HCT116 (cell line): ENCODE measurements at regions of chr11 and their contacts with region 1.

Region 1: GRCh38 chr11:65471410-65471762 is 27.5 kb upstream of the MALAT1 start:
- DNase-seq: no peak
- ATAC-seq: peak; percentile 73
- H3K4me3 ChIP-seq: peak overlapping the region in 1 of 2 experiments; percentile 31; a peak in 2 of 4 replicates
- H3K27ac ChIP-seq: peak overlapping the region; percentile 97
- H3K4me1 ChIP-seq: peaks cover 65 to 81% of the 10 kb centered on the region in 2 experiments
- H3K27me3 ChIP-seq: no peaks in the 10 kb centered on the region
- CTCF ChIP-seq: peak in 2 of 3 experiments; percentile 64 to 69; a peak in 4 of 6 replicates
- POLR2A ChIP-seq: no peak
- RAD21 ChIP-seq: no peak

Region 2: GRCh38 chr11:65366340-65366773 is 105.0 kb before region 1 on chr11:
- CTCF ChIA-PET with region 1: no interaction called
- POLR2A ChIA-PET with region 1: no interaction called
- RAD21 ChIA-PET with region 1: interaction called in 1 of 2 experiments, 3 read pairs
- intact Hi-C with region 1: loop called (anchors 1 kb)
- DNase-seq: peak; percentile 67
- ATAC-seq: peak; percentile 90
- H3K4me3 ChIP-seq: no peak overlapping the region
- H3K27ac ChIP-seq: no peak overlapping the region
- H3K4me1 ChIP-seq: peaks cover 6 to 10% of the 10 kb centered on the region in 2 experiments; a peak in 3 of 4 replicates
- H3K27me3 ChIP-seq: no peaks in the 10 kb centered on the region
- CTCF ChIP-seq: peak; percentile 62 to 85 (median 66)
- POLR2A ChIP-seq: no peak
- RAD21 ChIP-seq: peak; percentile 95

Region 3: GRCh38 chr11:65382033-65382807 is 89.2 kb before region 1 on chr11 and contains the start of gene SLC25A45:
- CTCF ChIA-PET with region 1: interaction called, 5 read pairs
- POLR2A ChIA-PET with region 1: interaction called, 3 read pairs
- RAD21 ChIA-PET with region 1: no interaction called
- intact Hi-C with region 1: loop called (anchors 2 kb)
- DNase-seq: peak; percentile 92
- ATAC-seq: peak; percentile 83
- H3K4me3 ChIP-seq: peak within 1 kb of the TSS; percentile 46 to 55
- H3K27ac ChIP-seq: peak within 1 kb of the TSS; percentile 99
- H3K4me1 ChIP-seq: peaks cover 55 to 69% of the 10 kb centered on the region in 2 experiments
- H3K27me3 ChIP-seq: no peaks in the 10 kb centered on the region
- CTCF ChIP-seq: peak in 2 of 3 experiments; percentile 63 to 75; a peak in 4 of 6 replicates
- POLR2A ChIP-seq: no peak
- RAD21 ChIP-seq: no peak
- total RNA-seq, gene SLC25A45: 3.9 TPM

Region 4: DNA sequence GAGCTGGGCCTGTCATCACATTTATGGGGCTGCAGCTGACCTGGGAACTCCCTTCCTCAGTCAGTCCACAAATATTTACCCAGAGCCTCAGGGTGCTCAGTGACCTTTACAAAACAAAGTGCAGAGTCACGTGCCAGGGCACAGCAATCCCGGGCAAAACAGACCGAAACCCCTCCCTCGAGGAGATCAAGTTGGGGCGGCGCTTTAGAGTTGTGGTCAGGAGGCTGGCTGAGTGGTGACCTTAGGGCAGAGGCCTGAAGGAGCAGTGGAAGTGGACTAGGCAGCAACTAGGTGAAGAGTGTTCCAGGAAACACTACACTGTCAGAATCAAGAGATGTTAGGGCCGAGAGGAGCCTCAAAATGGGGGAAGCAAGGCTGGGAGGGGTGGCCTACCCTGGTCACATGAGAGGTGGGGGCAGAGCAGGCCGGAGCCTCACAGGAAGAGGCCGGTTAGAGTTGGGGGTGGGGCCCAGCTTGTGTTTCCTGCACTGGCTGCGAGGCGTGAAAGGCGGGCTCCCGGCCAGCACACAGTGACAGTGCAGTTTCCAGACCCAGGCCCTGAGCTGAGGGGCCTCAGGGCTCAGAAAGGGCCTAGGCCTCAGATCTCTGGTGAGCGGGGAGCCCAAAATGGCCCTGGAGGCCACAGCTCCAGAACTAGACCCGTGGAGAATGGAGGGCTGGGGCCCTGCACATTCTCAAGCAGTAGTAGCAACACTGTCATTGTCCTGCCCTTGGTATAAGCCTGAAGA is 52.5 kb before region 1 on chr11:
- CTCF ChIA-PET with region 1: interaction called, 34 read pairs
- POLR2A ChIA-PET with region 1: interaction called, 116 read pairs
- RAD21 ChIA-PET with region 1: interaction called, 7 to 14 read pairs
- intact Hi-C with region 1: loop called (anchors 1 kb)
- DNase-seq: peak; percentile 84
- ATAC-seq: peak; percentile 59
- H3K4me3 ChIP-seq: peak overlapping the region; percentile 40 to 56
- H3K27ac ChIP-seq: peak overlapping the region; percentile 100
- H3K4me1 ChIP-seq: peaks cover 53 to 84% of the 10 kb centered on the region in 2 experiments
- H3K27me3 ChIP-seq: no peaks in the 10 kb centered on the region
- CTCF ChIP-seq: no peak
- POLR2A ChIP-seq: peak; percentile 87
- RAD21 ChIP-seq: no peak

Region 5: GRCh38 chr11:65448418-65449105 is 22.8 kb before region 1 on chr11:
- CTCF ChIA-PET with region 1: interaction called, 14 read pairs
- POLR2A ChIA-PET with region 1: interaction called, 5 read pairs
- RAD21 ChIA-PET with region 1: no interaction called
- intact Hi-C with region 1: no loop called
- DNase-seq: no peak
- ATAC-seq: peak; percentile 43; the same call in 1 of the 2 replicates
- H3K4me3 ChIP-seq: no peak overlapping the region
- H3K27ac ChIP-seq: no peak overlapping the region
- H3K4me1 ChIP-seq: peaks cover 11 to 21% of the 10 kb centered on the region in 2 experiments; a peak in 3 of 4 replicates
- H3K27me3 ChIP-seq: no peaks in the 10 kb centered on the region
- CTCF ChIP-seq: no peak
- POLR2A ChIP-seq: no peak
- RAD21 ChIP-seq: no peak

Region 6: DNA sequence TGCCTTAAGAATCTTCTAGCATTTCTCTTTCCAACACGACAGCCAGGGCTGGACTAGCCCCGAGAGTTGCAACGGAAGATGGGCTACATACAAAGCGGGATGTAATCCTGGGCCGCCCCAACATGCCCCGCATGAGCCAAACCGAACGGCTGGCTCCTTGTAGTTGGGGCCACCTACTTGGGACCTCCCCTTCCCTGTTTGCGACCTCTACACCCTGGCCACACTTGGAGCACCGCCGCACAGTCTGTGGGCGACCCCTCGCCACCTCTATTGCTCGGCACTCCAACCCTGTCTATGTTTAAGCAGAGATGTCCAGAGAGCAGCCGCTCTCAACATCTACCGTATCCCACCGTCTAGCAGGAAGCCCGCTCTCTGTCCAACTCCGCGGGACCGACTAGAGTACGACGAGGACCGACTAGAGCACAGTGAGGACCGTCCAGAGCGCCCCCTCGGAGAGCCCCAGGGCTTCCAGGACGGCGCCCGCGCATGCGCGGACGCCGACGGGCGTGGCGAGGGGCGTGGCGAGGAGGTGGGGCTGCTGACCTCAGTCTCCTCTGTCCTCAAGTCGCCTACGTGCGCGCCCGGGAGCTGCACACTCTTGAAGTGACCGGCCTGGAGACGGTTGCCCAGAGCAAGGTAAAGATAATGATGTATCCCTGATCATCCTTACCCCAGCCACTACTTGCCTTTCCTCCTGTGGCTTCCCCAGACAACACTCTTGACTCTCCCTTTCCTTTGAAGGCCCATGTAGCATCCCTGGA is 16.5 kb before region 1 on chr11:
- CTCF ChIA-PET with region 1: interaction called, 9 read pairs
- POLR2A ChIA-PET with region 1: interaction called, 14 read pairs
- RAD21 ChIA-PET with region 1: no interaction called
- intact Hi-C with region 1: no loop called
- DNase-seq: peak; percentile 85
- ATAC-seq: peak; percentile 85
- H3K4me3 ChIP-seq: peak overlapping the region; percentile 73 to 76
- H3K27ac ChIP-seq: peak overlapping the region; percentile 94
- H3K4me1 ChIP-seq: peaks cover 40 to 51% of the 10 kb centered on the region in 2 experiments
- H3K27me3 ChIP-seq: no peaks in the 10 kb centered on the region
- CTCF ChIP-seq: 0 out of 6 replicates have a peak, but pooled peaks of 1 of the 3 experiments have one; percentile 17
- POLR2A ChIP-seq: peak; percentile 94
- RAD21 ChIP-seq: no peak